Caco-2 (cell line): ENCODE measurements at regions of chr17 and their contacts with region 1.

Region 1: DNA sequence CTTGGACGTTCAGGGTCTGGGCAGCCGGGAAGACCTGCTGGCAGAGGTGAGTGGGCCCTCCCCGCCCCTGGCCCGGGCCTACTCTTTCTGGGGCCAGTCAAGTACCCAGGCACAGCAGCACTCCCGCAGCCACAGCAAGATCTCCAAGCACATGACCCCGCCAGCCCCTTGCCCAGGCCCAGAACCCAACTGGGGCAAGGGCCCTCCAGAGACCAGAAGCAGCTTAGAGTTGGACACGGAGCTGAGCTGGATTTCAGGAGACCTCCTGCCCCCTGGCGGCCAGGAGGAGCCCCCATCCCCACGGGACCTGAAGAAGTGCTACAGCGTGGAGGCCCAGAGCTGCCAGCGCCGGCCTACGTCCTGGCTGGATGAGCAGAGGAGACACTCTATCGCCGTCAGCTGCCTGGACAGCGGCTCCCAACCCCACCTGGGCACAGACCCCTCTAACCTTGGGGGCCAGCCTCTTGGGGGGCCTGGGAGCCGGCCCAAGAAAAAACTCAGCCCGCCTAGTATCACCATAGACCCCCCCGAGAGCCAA is 8.6 kb upstream of the ABCC3 start:
- DNase-seq: peak; percentile 92 to 94
- H3K4me3 ChIP-seq: no peak overlapping the region
- H3K4me3 Mint-ChIP-seq: no peak overlapping the region
- H3K27ac Mint-ChIP-seq: peak overlapping the region; percentile 0
- H3K4me1 ChIP-seq: peaks cover 37% of the 10 kb centered on the region
- H3K4me1 Mint-ChIP-seq: peaks cover 29% of the 10 kb centered on the region
- H3K27me3 ChIP-seq: no peaks in the 10 kb centered on the region
- H3K27me3 Mint-ChIP-seq: no peaks in the 10 kb centered on the region
- CTCF ChIP-seq: peak; percentile 99

Region 2: GRCh38 chr17:50541716-50542688 is 84.1 kb before region 1 on chr17:
- CTCF ChIA-PET with region 1: interaction called, 272 read pairs
- POLR2A ChIA-PET with region 1: interaction called, 9 read pairs
- intact Hi-C with region 1: loop called (anchors 1 kb)
- DNase-seq: peak; percentile 94 to 100
- H3K4me3 ChIP-seq: peak overlapping the region; percentile 45
- H3K4me3 Mint-ChIP-seq: peak overlapping the region; percentile 77
- H3K27ac Mint-ChIP-seq: peak overlapping the region; percentile 39
- H3K4me1 ChIP-seq: peaks cover 66% of the 10 kb centered on the region
- H3K4me1 Mint-ChIP-seq: peaks cover 69% of the 10 kb centered on the region
- H3K27me3 ChIP-seq: no peaks in the 10 kb centered on the region
- H3K27me3 Mint-ChIP-seq: no peaks in the 10 kb centered on the region
- CTCF ChIP-seq: peak; percentile 41 to 57

Region 3: DNA sequence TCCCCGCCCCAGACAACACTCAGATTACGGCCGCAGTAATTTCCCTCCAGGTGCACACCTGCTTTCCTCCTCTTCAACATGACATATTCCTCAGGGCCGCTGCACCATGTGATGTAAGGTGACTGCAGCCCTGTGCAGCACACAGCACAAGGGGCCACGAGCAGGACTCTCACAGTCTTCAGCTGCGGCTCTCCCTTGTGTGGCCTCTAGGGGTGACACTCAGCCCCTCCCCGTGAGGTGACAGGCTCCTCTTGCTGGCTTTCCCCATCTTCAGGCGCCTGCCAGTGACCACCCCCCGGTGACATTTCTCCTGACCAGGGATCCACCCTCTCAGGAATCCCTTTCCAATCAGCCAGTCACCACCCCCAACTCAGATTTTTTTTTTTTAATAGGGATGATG is 22.8 kb before region 1 on chr17:
- CTCF ChIA-PET with region 1: interaction called, 14 read pairs
- POLR2A ChIA-PET with region 1: no interaction called
- intact Hi-C with region 1: no loop called
- DNase-seq: peak; percentile 66 to 75
- H3K4me3 ChIP-seq: no peak overlapping the region
- H3K4me3 Mint-ChIP-seq: no peak overlapping the region
- H3K27ac Mint-ChIP-seq: no peak overlapping the region
- H3K4me1 ChIP-seq: no peaks in the 10 kb centered on the region
- H3K4me1 Mint-ChIP-seq: peaks cover 7% of the 10 kb centered on the region
- H3K27me3 ChIP-seq: no peaks in the 10 kb centered on the region
- H3K27me3 Mint-ChIP-seq: peaks cover 6% of the 10 kb centered on the region
- CTCF ChIP-seq: peak; percentile 61 to 66

Region 4: DNA sequence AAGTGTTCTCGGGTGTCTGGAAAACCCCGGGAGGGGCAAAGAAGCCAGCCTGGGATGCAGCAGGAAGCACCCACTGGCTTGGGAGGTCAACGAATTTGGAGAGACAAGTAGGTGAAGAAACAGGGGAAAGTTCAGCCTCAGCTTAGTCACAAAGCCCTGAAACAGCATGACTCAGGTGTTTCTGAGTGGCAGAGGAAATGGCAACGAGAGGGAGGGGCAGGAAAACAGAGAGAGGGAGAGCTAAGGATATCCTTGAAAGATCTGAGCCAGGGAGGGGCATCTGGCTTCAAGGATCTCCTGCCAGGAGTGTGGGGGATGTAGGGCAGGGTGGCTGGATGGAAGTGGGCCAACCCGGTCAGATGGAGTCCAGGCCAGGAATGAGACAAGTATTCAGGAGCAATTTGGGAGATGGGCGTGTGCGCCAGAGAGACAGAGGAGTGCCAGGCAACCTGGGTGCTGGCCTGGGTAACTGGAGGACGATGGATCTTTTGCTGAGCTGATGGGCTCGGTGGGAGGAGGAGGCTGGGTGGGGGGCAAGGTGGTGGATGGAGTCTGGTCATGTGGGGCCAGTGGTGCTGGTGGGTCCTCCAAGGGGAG is 35.8 kb after region 1 on chr17:
- CTCF ChIA-PET with region 1: interaction called, 23 read pairs
- POLR2A ChIA-PET with region 1: interaction called, 3 read pairs
- intact Hi-C with region 1: loop called (anchors 2 kb)
- DNase-seq: peak; percentile 86 to 92
- H3K4me3 ChIP-seq: no peak overlapping the region
- H3K4me3 Mint-ChIP-seq: peak overlapping the region; percentile 16
- H3K27ac Mint-ChIP-seq: peak overlapping the region; percentile 92
- H3K4me1 ChIP-seq: peaks cover 31% of the 10 kb centered on the region
- H3K4me1 Mint-ChIP-seq: peaks cover 47% of the 10 kb centered on the region
- H3K27me3 ChIP-seq: no peaks in the 10 kb centered on the region
- H3K27me3 Mint-ChIP-seq: no peaks in the 10 kb centered on the region
- CTCF ChIP-seq: no peak

Region 5: GRCh38 chr17:50691545-50692447 is 65.7 kb after region 1 on chr17:
- CTCF ChIA-PET with region 1: interaction called, 132 read pairs
- POLR2A ChIA-PET with region 1: interaction called, 20 read pairs
- intact Hi-C with region 1: loop called (anchors 1 kb)
- DNase-seq: peak in 1 of 2 experiments; percentile 54
- H3K4me3 ChIP-seq: no peak overlapping the region
- H3K4me3 Mint-ChIP-seq: peak overlapping the region; percentile 63
- H3K27ac Mint-ChIP-seq: peak overlapping the region; percentile 88
- H3K4me1 ChIP-seq: peaks cover 86% of the 10 kb centered on the region
- H3K4me1 Mint-ChIP-seq: peaks cover 70% of the 10 kb centered on the region
- H3K27me3 ChIP-seq: no peaks in the 10 kb centered on the region
- H3K27me3 Mint-ChIP-seq: no peaks in the 10 kb centered on the region
- CTCF ChIP-seq: no peak

Region 6: DNA sequence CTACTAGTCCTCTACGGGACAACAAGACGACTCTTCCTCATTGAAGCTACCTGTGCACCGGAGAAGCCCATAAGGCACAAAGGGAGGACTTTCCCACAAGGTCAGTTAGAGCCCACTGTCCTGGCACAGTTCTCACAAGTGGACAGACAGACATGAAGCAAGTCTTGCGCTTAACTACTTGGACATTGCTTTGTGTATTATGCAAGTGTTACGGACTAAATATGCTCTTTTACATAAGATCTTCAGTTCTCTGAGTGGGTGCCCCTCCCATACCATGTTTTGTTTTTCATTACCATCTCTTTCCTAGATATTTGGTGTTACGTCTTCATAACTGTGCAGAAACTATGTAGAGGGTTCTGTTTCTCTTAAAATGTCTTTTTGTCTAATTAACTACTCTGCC is 123.1 kb after region 1 on chr17:
- CTCF ChIA-PET with region 1: no interaction called
- POLR2A ChIA-PET with region 1: no interaction called
- intact Hi-C with region 1: no loop called
- DNase-seq: no peak
- H3K4me3 ChIP-seq: no peak overlapping the region
- H3K4me3 Mint-ChIP-seq: no peak overlapping the region
- H3K27ac Mint-ChIP-seq: no peak overlapping the region
- H3K4me1 ChIP-seq: peaks cover 9% of the 10 kb centered on the region; the same call in 1 of the 2 replicates
- H3K4me1 Mint-ChIP-seq: no peaks in the 10 kb centered on the region
- H3K27me3 ChIP-seq: no peaks in the 10 kb centered on the region
- H3K27me3 Mint-ChIP-seq: no peaks in the 10 kb centered on the region
- CTCF ChIP-seq: no peak